ENCODE measurements at regions of chr16 and their contacts with region 1.

Region 1: DNA sequence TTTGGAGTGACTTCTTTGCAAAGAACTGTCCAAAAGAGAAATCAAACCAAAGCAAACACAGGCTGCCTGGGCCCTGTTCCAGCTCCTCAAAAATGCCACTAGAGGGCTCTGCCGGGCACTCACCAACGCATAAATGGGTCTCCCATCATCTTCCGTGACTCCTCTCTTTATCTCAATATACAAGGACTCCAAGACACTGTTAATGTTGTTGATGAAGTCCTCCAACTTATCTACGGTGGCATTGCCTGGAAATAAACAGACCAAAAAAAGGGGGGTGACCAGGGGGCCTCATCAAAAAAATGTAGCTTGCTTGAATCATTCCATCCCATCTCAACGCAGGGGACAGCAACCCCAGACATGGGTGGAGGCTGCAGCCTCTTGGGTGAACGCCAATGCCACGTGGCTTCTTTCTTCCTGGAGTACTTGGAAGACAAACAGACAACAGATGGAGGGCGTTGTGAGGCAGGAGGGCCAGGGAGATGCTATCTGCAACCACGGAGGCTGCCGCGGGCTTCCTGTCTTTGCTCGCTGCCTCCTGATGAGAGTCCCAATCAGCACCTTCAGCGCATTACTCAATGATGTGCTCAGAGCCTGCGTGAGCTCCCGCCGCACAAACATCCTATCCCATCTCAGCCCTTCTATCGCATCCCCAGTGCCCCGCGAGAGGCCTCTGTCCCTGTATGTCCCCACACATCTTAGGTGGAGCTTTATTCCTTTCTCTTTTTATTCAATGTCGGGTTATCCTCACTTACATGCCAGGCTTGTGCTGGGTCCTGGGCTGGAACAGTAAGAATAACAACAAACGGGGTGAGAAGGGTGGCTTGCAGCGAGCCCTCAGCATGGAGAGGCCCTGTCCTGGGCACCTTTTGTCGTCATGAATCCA is 32.0 kb downstream of the KDM8 start:
- DNase-seq: peak; percentile 97
- H3K4me3 Mint-ChIP-seq: peak overlapping the region; percentile 73
- H3K27ac Mint-ChIP-seq: peak overlapping the region; percentile 98
- H3K4me1 Mint-ChIP-seq: peaks cover 98% of the 10 kb centered on the region
- H3K27me3 Mint-ChIP-seq: no peaks in the 10 kb centered on the region

Region 2: GRCh38 chr16:27179500-27180072 is 55.7 kb before region 1 on chr16:
- CTCF ChIA-PET with region 1: interaction called, 17 read pairs
- POLR2A ChIA-PET with region 1: interaction called, 3 read pairs
- DNase-seq: peak; percentile 92
- H3K4me3 Mint-ChIP-seq: no peak overlapping the region
- H3K27ac Mint-ChIP-seq: peak overlapping the region; percentile 71
- H3K4me1 Mint-ChIP-seq: peaks cover 58% of the 10 kb centered on the region
- H3K27me3 Mint-ChIP-seq: peaks cover 6% of the 10 kb centered on the region

Region 3: GRCh38 chr16:27222249-27223225 is 12.8 kb before region 1 on chr16:
- CTCF ChIA-PET with region 1: interaction called, 25 read pairs
- POLR2A ChIA-PET with region 1: no interaction called
- DNase-seq: no peak
- H3K4me3 Mint-ChIP-seq: no peak overlapping the region
- H3K27ac Mint-ChIP-seq: peak overlapping the region; percentile 5
- H3K4me1 Mint-ChIP-seq: peaks cover 26% of the 10 kb centered on the region
- H3K27me3 Mint-ChIP-seq: no peaks in the 10 kb centered on the region

Region 4: DNA sequence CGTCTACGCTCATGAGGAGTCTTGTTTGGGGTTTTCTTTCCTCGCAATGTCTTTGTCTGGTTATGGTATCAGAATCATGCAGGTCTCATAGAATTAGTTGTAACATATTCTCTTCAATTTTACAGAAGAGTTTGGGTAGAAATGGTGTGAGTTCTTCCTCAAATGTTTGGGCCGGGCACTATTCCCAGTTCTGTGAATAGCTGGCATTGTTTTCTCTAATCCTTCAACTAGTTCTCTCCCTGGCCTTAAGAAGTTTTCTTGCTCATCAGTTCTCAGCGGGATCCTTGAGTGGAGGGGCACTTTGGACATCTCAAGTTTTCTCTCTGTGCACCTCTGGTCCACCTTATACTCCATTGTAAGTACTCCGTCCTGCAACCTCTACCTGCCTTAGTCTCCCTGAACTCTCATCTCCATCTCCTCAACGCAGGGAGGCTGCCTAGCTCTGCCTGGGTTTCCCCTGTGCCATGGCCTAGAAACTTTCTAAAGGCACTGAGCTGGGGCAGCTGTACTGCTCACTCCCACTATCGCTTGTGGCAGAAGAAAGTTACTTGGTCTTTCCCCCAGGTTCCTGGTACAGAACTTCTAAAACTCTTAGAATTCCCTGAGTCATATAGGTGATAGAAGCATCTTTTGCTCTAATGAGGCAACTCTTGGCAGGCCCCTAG is 16.4 kb after region 1 on chr16:
- CTCF ChIA-PET with region 1: interaction called, 26 read pairs
- POLR2A ChIA-PET with region 1: no interaction called
- DNase-seq: no peak
- H3K4me3 Mint-ChIP-seq: no peak overlapping the region
- H3K27ac Mint-ChIP-seq: no peak overlapping the region
- H3K4me1 Mint-ChIP-seq: peaks cover 71% of the 10 kb centered on the region
- H3K27me3 Mint-ChIP-seq: no peaks in the 10 kb centered on the region

Region 5: GRCh38 chr16:27314161-27314723 is 78.9 kb after region 1 on chr16:
- CTCF ChIA-PET with region 1: interaction called, 53 read pairs
- POLR2A ChIA-PET with region 1: interaction called, 6 read pairs
- DNase-seq: peak; percentile 59
- H3K4me3 Mint-ChIP-seq: peak overlapping the region; percentile 95
- H3K27ac Mint-ChIP-seq: peak overlapping the region; percentile 92
- H3K4me1 Mint-ChIP-seq: peaks cover 44% of the 10 kb centered on the region
- H3K27me3 Mint-ChIP-seq: peaks cover 6% of the 10 kb centered on the region

Region 6: DNA sequence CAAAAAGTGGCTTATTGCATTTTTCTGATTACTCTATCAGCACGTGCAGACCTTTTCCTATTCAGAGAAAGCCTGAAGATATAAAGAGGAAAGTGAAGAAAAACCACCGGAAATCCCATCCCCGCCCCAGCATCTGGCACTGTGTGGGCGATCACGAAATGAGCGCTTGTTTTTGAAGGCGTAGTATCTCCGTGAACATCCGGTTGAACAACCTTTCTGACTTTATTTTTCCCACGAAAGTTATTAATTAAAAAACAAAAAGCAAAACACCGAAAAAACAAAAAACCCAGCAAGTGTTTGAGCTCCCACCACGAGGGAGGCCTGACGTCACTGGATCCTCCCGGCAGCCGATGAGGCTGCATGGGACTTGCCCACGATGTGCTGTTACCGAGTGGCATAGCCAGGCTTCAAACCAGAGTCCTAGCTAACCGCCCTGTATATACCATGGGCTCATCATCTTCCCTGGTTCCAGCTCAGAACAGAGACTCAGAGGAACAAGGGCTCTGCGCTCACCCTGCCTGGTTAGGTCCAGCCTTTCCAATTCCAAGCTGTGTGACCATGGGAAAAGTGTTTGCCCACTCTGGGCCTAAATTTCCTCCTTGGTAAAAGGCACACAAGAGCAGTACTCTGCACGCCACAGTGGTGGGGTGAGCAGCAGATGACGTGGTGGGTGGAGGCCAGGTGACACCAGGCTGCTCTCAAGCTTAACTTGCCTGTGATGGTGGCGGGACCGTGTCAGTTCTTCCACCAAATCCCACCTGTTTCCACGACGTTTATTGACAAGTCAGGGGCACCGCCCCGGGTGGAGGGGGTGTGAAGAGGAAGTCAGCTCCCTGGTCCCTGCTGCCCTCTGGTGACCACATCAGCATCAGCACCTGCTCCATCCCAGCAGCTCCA is 132.4 kb after region 1 on chr16:
- CTCF ChIA-PET with region 1: interaction called, 46 read pairs
- POLR2A ChIA-PET with region 1: interaction called, 3 read pairs
- DNase-seq: peak; percentile 90
- H3K4me3 Mint-ChIP-seq: peak overlapping the region; percentile 58
- H3K27ac Mint-ChIP-seq: peak overlapping the region; percentile 98
- H3K4me1 Mint-ChIP-seq: peaks cover 80% of the 10 kb centered on the region
- H3K27me3 Mint-ChIP-seq: no peaks in the 10 kb centered on the region

Region 7: GRCh38 chr16:27374804-27375425 is 139.6 kb after region 1 on chr16:
- CTCF ChIA-PET with region 1: interaction called, 46 read pairs
- POLR2A ChIA-PET with region 1: no interaction called
- DNase-seq: peak; percentile 45
- H3K4me3 Mint-ChIP-seq: no peak overlapping the region
- H3K27ac Mint-ChIP-seq: no peak overlapping the region
- H3K4me1 Mint-ChIP-seq: peaks cover 46% of the 10 kb centered on the region
- H3K27me3 Mint-ChIP-seq: no peaks in the 10 kb centered on the region

Region 8: GRCh38 chr16:27538508-27538907 is 303.2 kb after region 1 on chr16:
- CTCF ChIA-PET with region 1: no interaction called
- POLR2A ChIA-PET with region 1: no interaction called
- DNase-seq: no peak
- H3K4me3 Mint-ChIP-seq: no peak overlapping the region
- H3K27ac Mint-ChIP-seq: no peak overlapping the region
- H3K4me1 Mint-ChIP-seq: peaks cover 4% of the 10 kb centered on the region
- H3K27me3 Mint-ChIP-seq: no peaks in the 10 kb centered on the region